PC-9 (cell line): ENCODE measurements at regions of chr14 and their contacts with region 1.

Region 1: GRCh38 chr14:99936056-99936455 is 129.2 kb upstream of the EVL start:
- DNase-seq: no peak
- H3K4me3 ChIP-seq: no peak overlapping the region
- H3K27ac ChIP-seq: no peak overlapping the region
- H3K4me1 ChIP-seq: no peaks in the 10 kb centered on the region
- H3K27me3 ChIP-seq: no peaks in the 10 kb centered on the region
- CTCF ChIP-seq: no peak

Region 2: GRCh38 chr14:99961826-99962666 is 26.0 kb after region 1 on chr14:
- CTCF ChIA-PET with region 1: no interaction called
- POLR2A ChIA-PET with region 1: no interaction called
- intact Hi-C with region 1: no loop called
- DNase-seq: no peak
- H3K4me3 ChIP-seq: no peak overlapping the region
- H3K27ac ChIP-seq: no peak overlapping the region
- H3K4me1 ChIP-seq: no peaks in the 10 kb centered on the region
- H3K27me3 ChIP-seq: no peaks in the 10 kb centered on the region; the same call in 1 of the 2 replicates
- CTCF ChIP-seq: no peak

Region 3: DNA sequence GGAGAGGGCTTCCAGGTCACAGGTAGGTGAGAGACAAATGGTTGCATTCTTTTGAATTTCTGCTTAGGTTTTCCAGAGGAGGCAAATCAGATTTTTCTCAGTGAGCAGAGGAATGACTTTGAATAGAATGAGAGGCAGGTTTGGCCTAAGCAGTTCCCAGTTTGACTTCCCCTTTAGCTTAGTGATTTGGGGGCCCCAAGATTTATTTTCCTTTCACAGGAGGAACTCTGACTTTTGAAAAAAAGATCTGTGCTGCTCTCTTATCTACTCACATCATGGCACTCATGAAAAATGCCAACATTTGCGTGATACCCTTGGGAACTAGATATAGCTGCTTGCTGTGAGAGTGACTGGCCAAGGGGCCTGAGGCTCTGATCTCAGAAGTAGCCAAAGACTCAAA is 71.2 kb after region 1 on chr14:
- CTCF ChIA-PET with region 1: interaction called, 14 read pairs
- POLR2A ChIA-PET with region 1: no interaction called
- intact Hi-C with region 1: no loop called
- DNase-seq: no peak
- H3K4me3 ChIP-seq: no peak overlapping the region
- H3K27ac ChIP-seq: no peak overlapping the region
- H3K4me1 ChIP-seq: no peaks in the 10 kb centered on the region
- H3K27me3 ChIP-seq: no peaks in the 10 kb centered on the region
- CTCF ChIP-seq: no peak

Region 4: GRCh38 chr14:100065111-100065871 is 129.2 kb after region 1 on chr14 and contains the start of gene EVL:
- CTCF ChIA-PET with region 1: no interaction called
- POLR2A ChIA-PET with region 1: no interaction called
- intact Hi-C with region 1: no loop called
- DNase-seq: no peak
- H3K4me3 ChIP-seq: no peak within 1 kb of the TSS
- H3K27ac ChIP-seq: no peak within 1 kb of the TSS
- H3K4me1 ChIP-seq: peaks cover 35% of the 10 kb centered on the region
- H3K27me3 ChIP-seq: no peaks in the 10 kb centered on the region
- CTCF ChIP-seq: no peak
- total RNA-seq, gene EVL: 4.9 and 5.9 TPM in 2 replicates